Caco-2 (cell line): ENCODE measurements at regions of chr2 and their contacts with region 1.

Region 1: GRCh38 chr2:15730545-15731212 is 139.0 kb downstream of the DDX1 start:
- DNase-seq: no peak
- H3K4me3 ChIP-seq: no peak overlapping the region
- H3K4me3 Mint-ChIP-seq: no peak overlapping the region
- H3K27ac Mint-ChIP-seq: no peak overlapping the region
- H3K4me1 ChIP-seq: peaks cover 42% of the 10 kb centered on the region
- H3K4me1 Mint-ChIP-seq: peaks cover 49% of the 10 kb centered on the region
- H3K27me3 ChIP-seq: no peaks in the 10 kb centered on the region
- H3K27me3 Mint-ChIP-seq: no peaks in the 10 kb centered on the region
- CTCF ChIP-seq: no peak

Region 2: DNA sequence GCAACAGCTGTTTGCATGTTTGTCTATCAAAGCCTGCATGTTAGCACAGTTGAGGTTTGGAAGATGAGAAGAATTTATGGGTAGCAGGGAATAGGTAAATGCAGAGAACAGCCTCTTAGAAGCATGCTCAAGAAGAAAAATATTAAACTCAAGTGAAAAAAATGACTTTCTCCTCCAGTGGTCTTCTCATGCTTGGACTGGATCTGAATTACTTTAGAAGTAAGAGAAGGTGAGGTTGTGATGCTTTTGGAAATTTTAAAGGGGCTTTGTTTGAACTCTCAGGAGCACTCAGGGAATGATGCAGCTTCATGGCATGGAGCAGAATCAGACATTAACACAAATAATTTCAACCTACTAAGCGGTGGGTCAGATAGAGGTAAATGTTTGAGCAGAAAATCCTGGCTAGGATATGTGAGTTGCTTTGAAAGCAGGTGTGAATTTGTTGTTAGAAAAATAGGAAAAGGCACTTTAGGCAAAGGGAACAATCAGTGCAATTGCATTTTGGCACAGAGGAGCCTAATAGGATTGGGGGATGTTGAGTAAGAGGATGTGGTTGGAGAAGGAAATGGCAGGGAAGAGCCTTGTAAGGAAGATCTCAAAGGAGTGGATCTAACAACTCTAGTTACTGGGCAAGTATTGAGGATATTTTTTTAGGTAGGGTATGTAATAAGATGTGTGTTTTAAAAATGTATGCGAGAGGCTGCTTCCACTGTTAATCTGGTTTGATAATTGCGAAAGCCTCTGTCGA is 62.7 kb before region 1 on chr2:
- CTCF ChIA-PET with region 1: no interaction called
- POLR2A ChIA-PET with region 1: no interaction called
- intact Hi-C with region 1: loop called (anchors 5 kb)
- DNase-seq: no peak
- H3K4me3 ChIP-seq: no peak overlapping the region
- H3K4me3 Mint-ChIP-seq: no peak overlapping the region
- H3K27ac Mint-ChIP-seq: no peak overlapping the region
- H3K4me1 ChIP-seq: peaks cover 27% of the 10 kb centered on the region; the same call in 1 of the 2 replicates
- H3K4me1 Mint-ChIP-seq: peaks cover 29% of the 10 kb centered on the region
- H3K27me3 ChIP-seq: no peaks in the 10 kb centered on the region
- H3K27me3 Mint-ChIP-seq: no peaks in the 10 kb centered on the region
- CTCF ChIP-seq: no peak

Region 3: GRCh38 chr2:15748736-15749323 is 18.2 kb after region 1 on chr2:
- CTCF ChIA-PET with region 1: interaction called, 3 read pairs
- POLR2A ChIA-PET with region 1: interaction called, 3 read pairs
- intact Hi-C with region 1: loop called (anchors 1 kb)
- DNase-seq: peak in 1 of 2 experiments; percentile 59
- H3K4me3 ChIP-seq: no peak overlapping the region
- H3K4me3 Mint-ChIP-seq: no peak overlapping the region
- H3K27ac Mint-ChIP-seq: peak overlapping the region; percentile 93
- H3K4me1 ChIP-seq: peaks cover 74% of the 10 kb centered on the region
- H3K4me1 Mint-ChIP-seq: peaks cover 48% of the 10 kb centered on the region
- H3K27me3 ChIP-seq: no peaks in the 10 kb centered on the region
- H3K27me3 Mint-ChIP-seq: no peaks in the 10 kb centered on the region
- CTCF ChIP-seq: peak; percentile 27 to 40

Region 4: DNA sequence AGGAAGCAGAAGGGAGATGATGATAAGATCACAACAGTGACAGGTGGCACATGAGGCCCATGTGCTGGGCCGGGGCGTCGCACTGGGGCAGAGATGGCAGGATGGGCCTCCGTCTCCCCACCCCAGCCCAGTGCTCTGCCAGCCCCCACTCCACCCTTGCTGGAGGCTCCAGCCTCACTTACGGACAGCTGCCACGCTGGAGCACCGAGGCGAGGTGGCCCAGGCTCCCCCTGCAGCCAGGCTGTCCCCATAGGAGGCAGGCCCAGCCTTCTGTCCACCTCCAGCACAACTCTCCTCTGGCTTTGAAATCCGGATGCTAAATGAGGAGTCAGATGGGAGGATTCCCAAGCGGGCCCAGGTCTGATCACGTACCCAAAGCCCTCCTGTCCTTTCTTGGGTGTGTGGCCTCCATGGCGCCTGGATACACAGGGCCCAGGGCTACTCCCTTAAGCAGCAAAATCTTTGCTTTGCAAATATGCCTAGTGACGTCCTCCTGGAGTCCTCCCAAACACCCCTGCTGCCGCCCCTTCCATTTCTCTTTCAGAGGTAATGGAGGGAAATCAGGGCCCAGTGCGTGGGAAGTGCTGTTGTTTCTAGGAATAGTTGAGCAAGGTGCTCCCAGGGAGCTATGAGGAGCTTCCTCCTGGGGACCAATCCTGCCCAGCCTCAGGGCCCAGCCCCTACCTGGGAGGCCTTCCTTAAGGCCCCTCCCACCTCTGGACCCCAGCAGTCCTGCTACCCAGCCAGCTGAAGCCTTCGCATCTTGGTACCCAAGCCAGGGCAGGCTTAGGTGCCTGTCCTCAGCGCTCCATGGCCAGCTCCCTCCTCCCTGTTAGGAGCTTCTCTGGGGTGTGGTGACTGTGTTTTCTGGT is 39.2 kb after region 1 on chr2:
- CTCF ChIA-PET with region 1: no interaction called
- POLR2A ChIA-PET with region 1: no interaction called
- intact Hi-C with region 1: loop called (anchors 1 kb)
- DNase-seq: no peak
- H3K4me3 ChIP-seq: no peak overlapping the region
- H3K4me3 Mint-ChIP-seq: no peak overlapping the region
- H3K27ac Mint-ChIP-seq: peak overlapping the region; percentile 53
- H3K4me1 ChIP-seq: peaks cover 44% of the 10 kb centered on the region
- H3K4me1 Mint-ChIP-seq: peaks cover 53% of the 10 kb centered on the region
- H3K27me3 ChIP-seq: no peaks in the 10 kb centered on the region
- H3K27me3 Mint-ChIP-seq: no peaks in the 10 kb centered on the region
- CTCF ChIP-seq: no peak

Region 5: GRCh38 chr2:15776629-15776919 is 45.9 kb after region 1 on chr2:
- CTCF ChIA-PET with region 1: no interaction called
- POLR2A ChIA-PET with region 1: no interaction called
- intact Hi-C with region 1: loop called (anchors 1 kb)
- DNase-seq: peak; percentile 77 to 79
- H3K4me3 ChIP-seq: no peak overlapping the region
- H3K4me3 Mint-ChIP-seq: no peak overlapping the region
- H3K27ac Mint-ChIP-seq: peak overlapping the region; percentile 25
- H3K4me1 ChIP-seq: peaks cover 43% of the 10 kb centered on the region
- H3K4me1 Mint-ChIP-seq: peaks cover 45% of the 10 kb centered on the region
- H3K27me3 ChIP-seq: no peaks in the 10 kb centered on the region
- H3K27me3 Mint-ChIP-seq: no peaks in the 10 kb centered on the region
- CTCF ChIP-seq: no peak